Psoas muscle (tissue), 8 donors: ENCODE measurements at regions of chr20 and their contacts with region 1.

Region 1: DNA sequence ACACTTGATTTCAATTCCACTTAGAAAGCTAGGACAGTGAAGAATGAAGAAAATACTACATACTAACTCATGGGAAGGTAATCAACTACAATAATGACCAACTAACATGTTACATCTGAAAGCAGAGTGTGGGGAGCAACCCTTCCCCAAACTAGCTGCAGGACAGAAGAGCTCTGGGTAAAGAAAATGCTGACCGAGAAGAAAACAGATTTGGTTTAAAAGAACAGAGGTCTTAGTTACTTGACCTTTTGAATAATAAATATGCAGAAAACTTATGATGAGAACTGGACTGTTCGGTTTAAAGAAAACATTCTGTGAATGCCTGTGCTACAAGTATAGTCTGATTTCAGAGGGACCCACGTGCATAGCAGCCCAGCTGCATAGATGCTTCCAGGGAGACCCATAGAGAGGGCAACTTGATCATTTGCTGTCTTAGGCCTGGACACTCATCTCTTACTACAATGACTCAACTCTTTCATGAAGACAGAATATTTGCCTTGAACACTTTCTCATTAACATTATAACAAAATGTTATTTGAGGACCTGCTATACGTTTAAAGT is 53.5 kb downstream of the RALGAPA2 start:
- DNase-seq: no peak
- ATAC-seq: peak in 2 of 4 donors; percentile 34 to 41
- H3K4me3 ChIP-seq: no peak overlapping the region
- H3K27ac ChIP-seq: no peak overlapping the region
- H3K4me1 ChIP-seq: peaks cover 50% of the 10 kb centered on the region
- H3K27me3 ChIP-seq: no peaks in the 10 kb centered on the region
- CTCF ChIP-seq: no peak

Region 2: DNA sequence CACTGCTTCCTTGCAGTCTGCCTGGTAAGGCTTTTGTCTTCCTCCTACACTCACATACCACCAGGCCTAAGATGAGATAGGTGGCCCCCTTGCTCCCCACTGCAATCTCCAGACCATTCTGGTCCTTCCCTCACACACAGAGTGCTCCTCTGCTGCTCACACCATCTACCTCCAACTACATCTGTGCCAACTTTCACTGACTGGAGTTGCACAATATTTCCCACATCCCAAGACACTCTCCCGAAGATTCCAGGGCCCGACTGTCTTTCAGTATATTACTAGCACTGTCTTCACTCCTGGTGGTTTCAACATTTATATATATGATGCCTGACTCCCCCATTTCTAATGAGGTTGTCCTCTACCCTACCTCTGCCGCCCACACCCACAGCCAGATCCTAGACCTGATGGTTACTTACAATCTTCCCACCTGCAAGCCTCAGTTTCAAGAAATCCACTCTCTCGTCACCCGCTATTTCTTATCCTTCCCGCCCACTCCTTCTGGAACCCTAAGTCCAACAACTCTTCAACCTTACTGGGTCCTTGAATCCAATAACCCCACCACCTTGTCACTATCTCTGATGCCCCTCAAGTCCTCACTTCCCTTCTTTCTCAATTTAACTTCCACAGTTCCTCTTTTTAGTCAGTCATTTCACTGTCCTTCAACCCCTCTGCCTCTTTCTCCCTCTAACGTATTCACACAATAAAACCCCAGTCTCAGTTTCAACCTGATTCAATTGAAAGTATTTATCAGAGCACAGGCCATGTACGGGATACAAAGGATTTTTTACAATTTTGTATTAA is 31.9 kb after region 1 on chr20:
- intact Hi-C with region 1: loop called in 1 of 2 experiments (anchors 5 kb)
- DNase-seq: no peak
- ATAC-seq: peak; percentile 40 to 63 (median 56)
- H3K4me3 ChIP-seq: no peak overlapping the region
- H3K27ac ChIP-seq: peak overlapping the region; percentile 30
- H3K4me1 ChIP-seq: peaks cover 91% of the 10 kb centered on the region
- H3K27me3 ChIP-seq: no peaks in the 10 kb centered on the region
- CTCF ChIP-seq: no peak

Region 3: DNA sequence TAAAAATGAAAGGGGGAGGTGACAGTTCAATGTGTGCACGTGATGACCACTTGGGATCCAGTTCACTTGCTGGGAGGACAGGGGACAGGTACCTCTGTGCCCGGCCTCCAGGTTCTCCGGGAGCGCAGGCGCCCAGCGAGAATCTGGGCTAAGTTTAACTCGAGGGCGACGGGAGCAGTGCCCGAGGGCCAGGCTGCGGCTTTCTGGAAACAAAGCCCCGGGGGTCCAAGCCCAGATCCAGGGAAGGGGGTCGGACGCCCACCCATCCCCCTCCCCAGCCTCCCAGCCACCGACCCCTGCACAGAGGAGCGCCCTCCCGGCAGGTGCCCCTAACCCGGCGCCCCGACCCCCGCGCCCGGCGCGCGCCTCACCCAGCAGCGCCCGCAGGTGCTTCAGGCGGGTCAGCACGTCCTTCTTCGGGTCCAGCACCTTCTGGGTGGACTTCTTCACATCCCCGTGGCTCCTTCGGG is 53.1 kb after region 1 on chr20:
- intact Hi-C with region 1: no loop called
- DNase-seq: no peak
- ATAC-seq: peak; percentile 2 to 29 (median 25)
- H3K4me3 ChIP-seq: peak overlapping the region; percentile 89
- H3K27ac ChIP-seq: peak overlapping the region; percentile 91
- H3K4me1 ChIP-seq: peaks cover 45% of the 10 kb centered on the region
- H3K27me3 ChIP-seq: no peaks in the 10 kb centered on the region
- CTCF ChIP-seq: no peak